Ovary (tissue), 10 donors: ENCODE measurements at regions of chr18 and their contacts with region 1.

Region 1: DNA sequence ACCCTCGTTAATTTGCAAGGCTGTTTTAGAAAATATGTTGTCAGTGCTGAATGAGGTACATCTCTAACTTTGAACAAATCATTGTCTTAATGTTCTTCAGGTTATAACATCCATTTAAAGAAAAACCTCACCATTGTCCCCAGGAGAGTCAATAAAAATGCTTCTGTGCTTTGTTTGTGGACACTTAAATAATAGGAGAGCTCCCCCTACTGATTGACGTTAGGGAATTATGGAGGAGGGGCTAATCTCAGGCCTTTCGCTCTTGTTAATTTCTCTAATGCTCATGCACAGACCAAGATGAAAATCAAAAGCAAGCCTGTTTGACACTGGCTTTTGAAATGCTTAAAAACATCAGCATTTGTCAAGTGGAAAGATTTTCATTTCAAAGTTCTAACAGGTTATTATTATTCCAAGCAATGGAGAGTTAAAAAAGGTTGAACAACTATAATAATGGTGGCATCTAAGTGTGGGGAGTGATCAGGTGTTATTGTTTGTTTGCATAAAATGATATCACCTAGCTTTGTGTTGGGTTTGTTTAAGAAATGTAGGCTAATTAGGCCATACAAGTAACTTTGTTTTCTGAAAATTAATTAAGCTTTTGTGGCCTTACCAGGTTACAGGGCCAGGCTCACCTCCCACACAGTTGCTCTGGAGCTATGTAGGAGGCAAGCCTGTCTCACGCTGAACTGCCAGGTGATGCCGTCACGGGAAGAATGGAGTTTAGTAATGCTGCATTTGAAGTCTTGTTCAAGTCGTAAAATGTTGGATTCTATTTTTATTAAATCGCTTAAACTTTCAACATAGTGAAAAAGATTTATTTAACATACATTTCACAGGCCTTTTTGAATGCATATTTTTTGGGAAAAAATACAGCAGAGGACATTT is 51.7 kb upstream of the SMIM21 start:
- DNase-seq: no peak
- H3K4me3 ChIP-seq: no peak overlapping the region
- H3K27ac ChIP-seq: no peak overlapping the region
- H3K4me1 ChIP-seq: peaks cover 2% of the 10 kb centered on the region
- H3K27me3 ChIP-seq: no peaks in the 10 kb centered on the region
- CTCF ChIP-seq: peak; percentile 54 to 64 (median 62)
- EP300 ChIP-seq: no peak
- POLR2A ChIP-seq: no peak

Region 2: GRCh38 chr18:74645679-74646078 is 833.6 kb before region 1 on chr18:
- intact Hi-C with region 1: loop called in 2 of 4 experiments (anchors 5 to 10 kb)
- DNase-seq: no peak
- H3K4me3 ChIP-seq: no peak overlapping the region
- H3K27ac ChIP-seq: no peak overlapping the region
- H3K4me1 ChIP-seq: no peaks in the 10 kb centered on the region
- H3K27me3 ChIP-seq: no peaks in the 10 kb centered on the region
- CTCF ChIP-seq: no peak
- EP300 ChIP-seq: no peak
- POLR2A ChIP-seq: no peak

Region 3: DNA sequence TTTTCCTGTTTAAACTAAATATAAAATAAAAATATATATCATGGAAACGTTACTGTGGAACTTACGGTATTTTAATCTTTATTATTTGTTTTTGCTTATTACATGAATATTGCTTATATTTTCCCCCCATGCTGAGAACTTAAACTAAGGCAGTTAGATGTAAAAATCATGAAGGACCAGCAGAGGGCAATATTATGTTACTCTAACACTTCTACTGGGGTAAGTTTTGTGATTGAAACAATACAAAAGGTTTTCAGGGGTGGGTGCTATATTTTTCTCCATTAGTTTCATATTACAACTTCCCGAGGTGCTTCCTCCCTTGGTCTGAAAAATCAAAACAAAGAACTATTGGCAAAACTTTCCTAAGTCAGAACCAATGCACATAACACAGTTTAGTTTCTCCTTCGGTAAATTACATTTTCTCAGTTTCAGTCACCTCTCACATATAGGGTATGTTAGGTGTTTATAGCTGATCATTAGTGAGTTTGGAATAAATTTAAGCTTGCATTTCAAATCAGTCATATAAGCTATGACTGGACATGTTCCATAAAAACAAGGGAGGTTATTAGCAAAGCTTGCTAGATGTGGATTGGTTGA is 826.7 kb before region 1 on chr18:
- intact Hi-C with region 1: loop called in 2 of 4 experiments (anchors 5 to 10 kb)
- DNase-seq: no peak
- H3K4me3 ChIP-seq: no peak overlapping the region
- H3K27ac ChIP-seq: no peak overlapping the region
- H3K4me1 ChIP-seq: no peaks in the 10 kb centered on the region
- H3K27me3 ChIP-seq: no peaks in the 10 kb centered on the region
- CTCF ChIP-seq: peak in 2 of 3 donors; percentile 36 to 61
- EP300 ChIP-seq: no peak
- POLR2A ChIP-seq: no peak

Region 4: GRCh38 chr18:75209129-75209950 is 269.9 kb before region 1 on chr18 and contains the start of gene PTGR3:
- intact Hi-C with region 1: loop called in 1 of 4 experiments (anchors 10 kb)
- DNase-seq: peak; percentile 86 to 89 (median 87)
- H3K4me3 ChIP-seq: peak within 1 kb of the TSS; percentile 97
- H3K27ac ChIP-seq: peak within 1 kb of the TSS; percentile 87 to 99
- H3K4me1 ChIP-seq: peaks cover 4% of the 10 kb centered on the region
- H3K27me3 ChIP-seq: no peaks in the 10 kb centered on the region
- CTCF ChIP-seq: no peak
- EP300 ChIP-seq: no peak
- POLR2A ChIP-seq: peak; percentile 27
- total RNA-seq, gene PTGR3: 15.4 to 55.7 (median 32.6) TPM

Region 5: GRCh38 chr18:75658330-75658729 is 179.1 kb after region 1 on chr18:
- intact Hi-C with region 1: no loop called
- DNase-seq: no peak
- H3K4me3 ChIP-seq: no peak overlapping the region
- H3K27ac ChIP-seq: no peak overlapping the region
- H3K4me1 ChIP-seq: peaks cover 7% of the 10 kb centered on the region
- H3K27me3 ChIP-seq: no peaks in the 10 kb centered on the region
- CTCF ChIP-seq: no peak
- EP300 ChIP-seq: no peak
- POLR2A ChIP-seq: no peak